A549 (cell line): ENCODE measurements at regions of chr11 and their contacts with region 1.

Region 1: DNA sequence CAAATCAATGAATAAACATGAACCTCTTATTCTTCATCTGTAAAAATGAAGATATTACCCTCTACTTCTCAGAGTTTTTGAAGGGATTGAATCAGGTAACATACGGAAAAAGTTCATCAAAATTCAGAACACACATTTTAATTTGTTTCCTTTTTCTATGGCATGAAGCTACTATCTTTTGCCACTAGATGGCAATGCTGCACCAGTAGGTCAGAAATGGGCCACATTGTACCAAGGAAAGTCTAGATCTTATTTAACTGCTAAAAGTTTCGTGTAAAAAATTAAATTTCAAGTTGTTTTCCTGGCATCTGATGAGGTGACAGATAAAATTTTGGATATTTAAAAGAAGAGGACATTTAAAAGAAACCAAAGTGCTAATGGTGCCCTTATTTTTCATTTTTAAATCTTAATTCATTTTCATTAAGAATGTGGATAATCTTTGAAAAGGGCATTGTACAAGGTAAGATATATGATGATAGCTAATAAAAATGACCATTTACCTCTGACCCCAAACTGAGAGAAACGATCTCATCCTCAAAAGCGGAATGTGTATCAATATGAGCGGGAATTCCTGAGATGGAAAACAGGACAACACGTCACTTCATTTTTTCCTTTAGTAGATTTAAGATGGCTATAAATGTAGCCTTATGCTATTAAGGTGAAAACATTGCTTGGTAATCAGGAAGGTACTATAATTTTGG is 16.1 kb downstream of the ALKBH8 start:
- DNase-seq: peak in 1 of 2 experiments; percentile 25
- ATAC-seq: 0 out of 6 replicates have a peak, but pooled peaks of 1 of the 2 experiments have one; percentile 44
- H3K4me3 ChIP-seq: no peak overlapping the region
- H3K27ac ChIP-seq: no peak overlapping the region
- H3K4me1 ChIP-seq: no peaks in the 10 kb centered on the region
- CTCF ChIP-seq: peak; percentile 73
- EP300 ChIP-seq: no peak
- POLR2A ChIP-seq: no peak
- RAD21 ChIP-seq: peak; percentile 76 to 77

Region 2: GRCh38 chr11:107565219-107565937 is 16.0 kb after region 1 on chr11 and contains the start of gene ALKBH8:
- CTCF ChIA-PET with region 1: interaction called, 74 read pairs
- POLR2A ChIA-PET with region 1: no interaction called
- DNase-seq: peak; percentile 52 to 58
- ATAC-seq: peak; percentile 90 to 95
- H3K4me3 ChIP-seq: peak within 1 kb of the TSS; percentile 75
- H3K27ac ChIP-seq: peak within 1 kb of the TSS; percentile 89 to 94
- H3K4me1 ChIP-seq: peaks cover 47% of the 10 kb centered on the region
- CTCF ChIP-seq: no peak
- EP300 ChIP-seq: no peak
- POLR2A ChIP-seq: no peak; the same call in 1 of the 2 replicates
- RAD21 ChIP-seq: no peak
- polyA plus RNA-seq, gene ALKBH8: 7.1 and 10.8 TPM in 2 replicates

Region 3: DNA sequence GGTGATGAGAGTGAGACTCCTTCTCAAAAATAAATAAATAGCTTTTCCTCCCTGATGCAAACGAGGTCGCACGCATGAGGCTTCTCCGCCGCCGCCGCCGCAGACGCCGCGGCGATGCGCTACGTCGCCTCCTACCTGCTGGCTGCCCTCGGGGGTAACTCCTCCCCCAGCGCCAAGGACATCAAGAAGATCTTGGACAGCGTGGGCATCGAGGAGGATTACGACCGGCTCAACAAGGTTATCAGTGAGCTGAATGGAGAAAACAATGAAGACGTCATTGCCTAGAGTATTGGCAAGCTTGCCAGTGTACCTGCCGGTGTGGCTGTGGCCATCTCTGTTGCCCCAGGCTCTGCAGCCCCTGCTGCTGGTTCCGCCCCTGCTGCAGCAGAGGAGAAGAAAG is 358.9 kb after region 1 on chr11:
- CTCF ChIA-PET with region 1: no interaction called
- POLR2A ChIA-PET with region 1: no interaction called
- DNase-seq: no peak
- ATAC-seq: no peak
- H3K4me3 ChIP-seq: no peak overlapping the region
- H3K27ac ChIP-seq: no peak overlapping the region
- H3K4me1 ChIP-seq: no peaks in the 10 kb centered on the region
- CTCF ChIP-seq: no peak
- EP300 ChIP-seq: no peak
- POLR2A ChIP-seq: no peak
- RAD21 ChIP-seq: no peak